Right lobe of liver (tissue), 6 donors: ENCODE measurements at regions of chr6 and their contacts with region 1.

Region 1: GRCh38 chr6:31042806-31043205 is 32.5 kb downstream of the MUC22 start:
- DNase-seq: peak in 2 of 3 donors; percentile 47 to 59
- ATAC-seq: peak; percentile 66 to 81 (median 74)
- H3K4me3 ChIP-seq: no peak overlapping the region
- H3K27ac ChIP-seq: no peak overlapping the region
- H3K4me1 ChIP-seq: no peaks in the 10 kb centered on the region
- H3K27me3 ChIP-seq: no peaks in the 10 kb centered on the region
- CTCF ChIP-seq: peak; percentile 40 to 52 (median 50)
- POLR2A ChIP-seq: no peak

Region 2: GRCh38 chr6:30935018-30935417 is 107.8 kb before region 1 on chr6:
- intact Hi-C with region 1: loop called in 1 of 2 experiments (anchors 10 kb)
- DNase-seq: no peak
- ATAC-seq: no peak
- H3K4me3 ChIP-seq: no peak overlapping the region
- H3K27ac ChIP-seq: no peak overlapping the region
- H3K4me1 ChIP-seq: no peaks in the 10 kb centered on the region
- H3K27me3 ChIP-seq: no peaks in the 10 kb centered on the region
- CTCF ChIP-seq: no peak
- POLR2A ChIP-seq: no peak